Heart left ventricle (tissue), 16 donors: ENCODE measurements at regions of chr12 and their contacts with region 1.

Region 1: GRCh38 chr12:58847901-58848600 is 72.3 kb downstream of the LRIG3 start:
- DNase-seq: no peak
- ATAC-seq: no peak
- H3K4me3 ChIP-seq: no peak overlapping the region
- H3K27ac ChIP-seq: no peak overlapping the region
- H3K4me1 ChIP-seq: no peaks in the 10 kb centered on the region
- H3K27me3 ChIP-seq: no peaks in the 10 kb centered on the region
- CTCF ChIP-seq: no peak
- POLR2A ChIP-seq: no peak

Region 2: GRCh38 chr12:58583541-58584339 is 264.3 kb before region 1 on chr12:
- intact Hi-C with region 1: no loop called
- DNase-seq: no peak
- ATAC-seq: no peak
- H3K4me3 ChIP-seq: no peak overlapping the region
- H3K27ac ChIP-seq: peak overlapping the region in 2 of 12 donors; percentile 3 to 47
- H3K4me1 ChIP-seq: peaks cover 0 to 14% (median 0%) of the 10 kb centered on the region in 12 donors
- H3K27me3 ChIP-seq: peaks cover 0 to 4% (median 0%) of the 10 kb centered on the region in 9 donors
- CTCF ChIP-seq: no peak
- POLR2A ChIP-seq: no peak

Region 3: DNA sequence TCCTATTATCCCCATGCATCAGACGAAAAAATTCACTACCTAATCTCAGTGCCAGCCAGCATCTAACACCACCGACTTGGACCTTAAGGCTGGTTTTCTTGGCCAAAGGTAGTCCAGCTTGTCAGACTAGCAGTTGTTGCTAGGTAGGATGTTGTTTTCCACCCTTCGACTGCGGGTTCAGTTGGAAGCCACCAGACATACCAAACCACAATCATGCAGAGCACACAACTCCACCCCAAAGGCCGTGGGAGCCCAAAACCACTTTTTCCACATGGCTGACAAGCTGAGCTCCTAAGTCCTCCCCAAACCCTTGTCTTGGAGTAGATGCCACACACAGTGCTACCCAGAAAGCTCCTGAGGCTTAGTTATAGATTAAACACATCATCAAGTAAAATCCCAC is 25.4 kb after region 1 on chr12:
- intact Hi-C with region 1: loop called in 1 of 10 experiments (anchors 2 kb)
- DNase-seq: no peak
- ATAC-seq: no peak
- H3K4me3 ChIP-seq: no peak overlapping the region
- H3K27ac ChIP-seq: no peak overlapping the region
- H3K4me1 ChIP-seq: peaks cover 0 to 3% (median 0%) of the 10 kb centered on the region in 12 donors
- H3K27me3 ChIP-seq: no peaks in the 10 kb centered on the region
- CTCF ChIP-seq: no peak
- POLR2A ChIP-seq: no peak